ENCODE measurements at regions of chr15 and their contacts with region 1.

Region 1: DNA sequence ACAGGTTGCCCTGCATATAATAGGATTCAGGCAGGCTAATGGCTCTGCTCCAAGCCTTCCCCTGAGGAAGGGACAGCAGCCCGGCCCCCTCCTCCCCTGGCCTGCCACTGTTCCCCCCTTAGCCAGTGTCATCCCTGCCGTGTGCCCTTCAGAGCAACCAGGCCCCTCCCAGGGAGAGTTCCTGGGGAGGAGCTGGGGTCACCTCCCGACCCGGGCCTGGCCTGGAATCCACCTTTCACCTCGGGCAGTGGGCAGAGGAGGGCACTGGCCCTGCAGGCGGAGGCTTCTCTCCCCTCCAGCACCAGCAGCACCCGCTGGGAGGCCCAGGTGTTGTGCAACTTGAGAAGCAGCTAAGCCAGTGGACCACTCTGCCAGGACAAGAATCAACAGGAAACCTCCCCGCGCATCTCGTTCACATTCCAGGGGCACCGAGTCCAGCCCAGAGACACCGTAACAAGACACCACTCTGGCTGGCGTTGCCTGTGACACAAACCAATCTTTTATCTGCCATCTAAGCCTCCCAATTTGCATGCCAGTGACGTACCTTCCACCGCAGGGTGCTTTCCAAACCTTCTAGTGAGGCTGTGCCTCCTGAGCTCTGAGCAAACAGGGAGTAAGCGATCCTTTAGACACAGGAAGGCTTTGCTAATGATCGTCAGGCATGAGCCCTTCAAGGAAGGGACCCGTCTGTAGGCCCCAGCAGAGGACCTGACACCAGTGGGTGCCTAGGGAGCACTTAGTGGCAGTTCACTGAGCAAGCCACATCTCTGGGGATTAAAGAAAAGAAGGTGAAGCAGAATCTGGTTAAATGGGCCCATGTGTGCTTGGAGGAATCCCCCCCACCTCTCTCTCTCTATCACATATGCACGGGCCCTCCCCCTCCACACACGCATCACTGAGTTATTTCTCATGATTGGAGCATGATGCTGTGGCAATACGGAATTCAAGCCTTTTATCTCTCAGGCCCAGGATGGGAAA is 98.9 kb upstream of the TLE3 start:
- DNase-seq: peak; percentile 96 to 98
- H3K4me3 ChIP-seq: peak overlapping the region; percentile 7; the same call in 1 of the 2 replicates
- H3K27ac ChIP-seq: peak overlapping the region; percentile 85
- H3K4me1 ChIP-seq: peaks cover 53% of the 10 kb centered on the region
- H3K27me3 ChIP-seq: no peaks in the 10 kb centered on the region
- CTCF ChIP-seq: no peak

Region 2: GRCh38 chr15:69576035-69576526 is 620.5 kb before region 1 on chr15:
- CTCF ChIA-PET with region 1: no interaction called
- POLR2A ChIA-PET with region 1: no interaction called
- intact Hi-C with region 1: loop called (anchors 5 kb)
- DNase-seq: peak in 1 of 2 experiments; percentile 71
- H3K4me3 ChIP-seq: no peak overlapping the region
- H3K27ac ChIP-seq: no peak overlapping the region
- H3K4me1 ChIP-seq: peaks cover 60% of the 10 kb centered on the region
- H3K27me3 ChIP-seq: no peaks in the 10 kb centered on the region
- CTCF ChIP-seq: peak; percentile 76

Region 3: GRCh38 chr15:70014860-70015490 is 181.6 kb before region 1 on chr15:
- CTCF ChIA-PET with region 1: no interaction called
- POLR2A ChIA-PET with region 1: no interaction called
- intact Hi-C with region 1: no loop called
- DNase-seq: peak in 1 of 2 experiments; percentile 46
- H3K4me3 ChIP-seq: no peak overlapping the region
- H3K27ac ChIP-seq: no peak overlapping the region
- H3K4me1 ChIP-seq: no peaks in the 10 kb centered on the region
- H3K27me3 ChIP-seq: no peaks in the 10 kb centered on the region
- CTCF ChIP-seq: no peak

Region 4: DNA sequence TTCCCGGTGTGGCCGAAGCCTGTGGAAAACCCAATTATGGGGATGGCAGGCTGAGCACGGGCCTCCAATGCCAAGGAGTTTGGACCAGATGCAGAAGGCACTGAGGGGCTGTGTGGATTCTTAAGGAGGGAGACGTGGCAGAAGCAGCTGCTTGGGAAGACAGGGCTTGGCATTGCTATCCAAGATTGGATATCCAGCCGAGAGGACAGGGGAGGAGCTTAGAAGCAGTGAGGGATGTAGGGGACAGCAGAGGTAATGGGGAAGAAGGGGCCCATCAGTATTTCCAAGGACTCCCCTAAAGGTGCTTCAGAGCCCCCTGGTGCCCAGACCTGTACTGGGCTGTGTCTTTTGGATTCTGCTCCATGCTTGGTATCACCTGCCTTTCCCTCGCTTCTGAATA is 13.9 kb after region 1 on chr15:
- CTCF ChIA-PET with region 1: no interaction called
- POLR2A ChIA-PET with region 1: no interaction called
- intact Hi-C with region 1: no loop called
- DNase-seq: no peak
- H3K4me3 ChIP-seq: no peak overlapping the region
- H3K27ac ChIP-seq: no peak overlapping the region
- H3K4me1 ChIP-seq: no peaks in the 10 kb centered on the region
- H3K27me3 ChIP-seq: no peaks in the 10 kb centered on the region
- CTCF ChIP-seq: no peak

Region 5: DNA sequence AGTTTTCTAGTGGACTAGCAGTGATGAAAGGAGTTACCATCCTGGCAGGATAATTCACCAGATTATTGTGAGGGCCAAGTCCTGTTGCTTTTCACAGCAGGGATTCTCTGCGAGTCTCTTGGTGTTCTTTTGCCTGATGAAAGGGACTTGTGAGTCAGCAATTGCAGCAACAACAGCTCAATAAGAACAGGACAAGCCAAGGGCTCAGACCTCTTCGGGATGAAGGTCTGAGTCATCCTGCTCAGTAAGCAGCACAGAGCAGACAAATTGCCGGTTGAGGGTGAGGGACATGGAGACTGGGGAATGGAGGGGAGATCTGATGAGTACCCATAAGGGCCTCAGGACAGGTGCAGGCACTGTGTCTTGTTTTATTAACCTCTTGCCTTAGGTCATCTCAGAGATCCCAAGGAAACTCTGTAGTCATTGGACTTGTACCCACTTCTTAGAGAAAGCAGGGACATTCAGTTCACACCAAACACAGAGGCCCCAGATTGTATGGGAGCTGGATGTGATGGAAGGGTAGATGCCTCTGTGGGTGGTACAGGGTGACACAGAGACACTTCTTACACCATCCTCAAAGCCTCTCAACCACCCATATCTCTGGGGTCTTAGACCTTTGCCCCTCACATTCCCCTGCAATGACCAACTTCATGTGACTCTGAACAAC is 75.0 kb after region 1 on chr15:
- CTCF ChIA-PET with region 1: no interaction called
- POLR2A ChIA-PET with region 1: interaction called, 4 read pairs
- intact Hi-C with region 1: loop called (anchors 1 kb)
- DNase-seq: peak; percentile 63 to 93
- H3K4me3 ChIP-seq: no peak overlapping the region
- H3K27ac ChIP-seq: peak overlapping the region; percentile 74
- H3K4me1 ChIP-seq: peaks cover 56% of the 10 kb centered on the region
- H3K27me3 ChIP-seq: no peaks in the 10 kb centered on the region
- CTCF ChIP-seq: no peak

Region 6: GRCh38 chr15:70362886-70363285 is 166.3 kb after region 1 on chr15:
- CTCF ChIA-PET with region 1: interaction called, 25 read pairs
- POLR2A ChIA-PET with region 1: no interaction called
- intact Hi-C with region 1: no loop called
- DNase-seq: peak in 1 of 2 experiments; percentile 13
- H3K4me3 ChIP-seq: no peak overlapping the region
- H3K27ac ChIP-seq: no peak overlapping the region
- H3K4me1 ChIP-seq: no peaks in the 10 kb centered on the region
- H3K27me3 ChIP-seq: no peaks in the 10 kb centered on the region
- CTCF ChIP-seq: peak; percentile 39; the same call in 1 of the 2 replicates

Region 7: GRCh38 chr15:70447928-70448698 is 251.5 kb after region 1 on chr15:
- CTCF ChIA-PET with region 1: no interaction called
- POLR2A ChIA-PET with region 1: no interaction called
- intact Hi-C with region 1: no loop called
- DNase-seq: no peak
- H3K4me3 ChIP-seq: no peak overlapping the region
- H3K27ac ChIP-seq: no peak overlapping the region
- H3K4me1 ChIP-seq: peaks cover 10% of the 10 kb centered on the region
- H3K27me3 ChIP-seq: no peaks in the 10 kb centered on the region
- CTCF ChIP-seq: no peak

Region 8: DNA sequence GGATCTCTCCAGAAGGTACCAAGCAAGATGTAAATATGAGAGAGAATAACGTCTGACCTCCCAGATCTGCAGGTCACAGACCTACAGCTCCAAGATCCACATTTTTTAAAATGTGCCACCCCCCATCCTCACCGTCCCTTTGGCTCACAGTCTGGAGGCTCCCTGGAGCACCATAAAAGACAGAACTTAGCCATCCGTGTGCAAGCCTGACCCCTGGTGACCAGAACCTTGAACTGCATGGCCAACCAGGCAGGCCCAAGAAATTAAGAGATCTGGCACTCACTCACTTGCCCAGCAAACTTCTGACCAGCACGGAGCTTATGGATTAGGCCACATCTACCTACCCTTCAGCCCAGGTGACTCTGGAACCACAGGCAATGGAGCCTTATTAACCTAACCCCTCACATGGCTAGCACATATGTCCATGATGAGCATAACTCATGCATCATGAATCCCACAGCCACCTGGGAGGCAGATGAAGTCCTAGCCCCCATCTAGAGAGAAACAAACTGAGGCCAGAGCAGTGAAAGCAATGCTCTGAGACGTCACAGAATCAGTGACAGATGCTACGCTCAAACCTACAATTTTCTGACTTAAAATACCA is 291.5 kb after region 1 on chr15:
- CTCF ChIA-PET with region 1: no interaction called
- POLR2A ChIA-PET with region 1: no interaction called
- intact Hi-C with region 1: loop called (anchors 5 kb)
- DNase-seq: peak; percentile 57 to 68
- H3K4me3 ChIP-seq: no peak overlapping the region
- H3K27ac ChIP-seq: 0 out of 2 replicates have a peak overlapping the region, but pooled peaks have one; percentile 91
- H3K4me1 ChIP-seq: peaks cover 53% of the 10 kb centered on the region
- H3K27me3 ChIP-seq: no peaks in the 10 kb centered on the region
- CTCF ChIP-seq: peak; percentile 95

Region 9: GRCh38 chr15:71337207-71337700 is 1140.7 kb after region 1 on chr15:
- CTCF ChIA-PET with region 1: no interaction called
- POLR2A ChIA-PET with region 1: interaction called, 10 read pairs
- intact Hi-C with region 1: no loop called
- DNase-seq: peak; percentile 80 to 97
- H3K4me3 ChIP-seq: peak overlapping the region; percentile 42; the same call in 1 of the 2 replicates
- H3K27ac ChIP-seq: peak overlapping the region; percentile 97
- H3K4me1 ChIP-seq: peaks cover 60% of the 10 kb centered on the region
- H3K27me3 ChIP-seq: no peaks in the 10 kb centered on the region
- CTCF ChIP-seq: no peak

Region 10: GRCh38 chr15:71666763-71667620 is 1470.4 kb after region 1 on chr15:
- CTCF ChIA-PET with region 1: no interaction called
- POLR2A ChIA-PET with region 1: no interaction called
- intact Hi-C with region 1: no loop called
- DNase-seq: no peak
- H3K4me3 ChIP-seq: no peak overlapping the region
- H3K27ac ChIP-seq: no peak overlapping the region
- H3K4me1 ChIP-seq: no peaks in the 10 kb centered on the region
- H3K27me3 ChIP-seq: no peaks in the 10 kb centered on the region
- CTCF ChIP-seq: no peak